PC-9 (cell line): ENCODE measurements at regions of chr17 and their contacts with region 1.

Region 1: DNA sequence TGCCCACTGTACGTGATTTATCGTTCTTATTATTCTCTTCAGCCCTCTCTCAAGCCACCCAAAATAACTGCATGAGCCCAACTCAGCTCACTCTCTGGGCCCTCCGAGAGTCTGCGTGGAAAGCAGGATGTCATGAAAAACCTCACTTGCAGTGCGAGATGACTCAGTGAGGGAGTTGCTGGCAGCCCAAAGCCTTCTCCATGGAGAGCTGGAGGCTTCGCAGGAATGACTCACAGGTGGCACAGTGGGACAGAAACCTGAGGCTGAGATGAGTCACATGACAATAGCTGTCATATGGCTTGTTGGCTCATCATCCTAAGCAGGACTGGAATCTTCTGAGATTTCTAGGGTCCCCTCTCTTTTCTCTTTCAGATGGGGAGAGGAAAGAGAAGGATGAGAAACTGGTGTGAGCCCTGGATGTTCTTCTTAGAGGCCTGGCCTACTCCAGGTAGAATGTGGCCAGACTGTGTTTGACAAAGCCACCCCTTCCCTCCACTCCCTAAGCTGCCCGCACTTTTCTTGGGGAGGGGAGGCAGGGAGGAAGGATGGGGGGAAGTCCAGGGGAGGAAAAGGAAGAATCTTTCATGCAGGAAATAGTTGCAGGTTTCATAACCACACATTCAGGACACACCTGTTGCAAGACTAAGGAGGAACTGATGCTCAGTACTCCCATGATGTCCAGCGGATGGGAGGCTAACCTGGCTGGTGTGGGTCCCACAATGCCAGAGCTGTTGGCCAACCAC is 160.6 kb upstream of the RPL38 start:
- DNase-seq: peak; percentile 27 to 70
- H3K4me3 ChIP-seq: no peak overlapping the region
- H3K27ac ChIP-seq: no peak overlapping the region
- H3K4me1 ChIP-seq: no peaks in the 10 kb centered on the region
- H3K27me3 ChIP-seq: peaks cover 74% of the 10 kb centered on the region
- CTCF ChIP-seq: no peak

Region 2: GRCh38 chr17:73936908-73937627 is 105.8 kb before region 1 on chr17:
- CTCF ChIA-PET with region 1: interaction called, 14 read pairs
- POLR2A ChIA-PET with region 1: interaction called, 4 read pairs
- intact Hi-C with region 1: no loop called
- DNase-seq: no peak
- H3K4me3 ChIP-seq: no peak overlapping the region
- H3K27ac ChIP-seq: no peak overlapping the region
- H3K4me1 ChIP-seq: no peaks in the 10 kb centered on the region
- H3K27me3 ChIP-seq: peaks cover 88% of the 10 kb centered on the region
- CTCF ChIP-seq: no peak

Region 3: DNA sequence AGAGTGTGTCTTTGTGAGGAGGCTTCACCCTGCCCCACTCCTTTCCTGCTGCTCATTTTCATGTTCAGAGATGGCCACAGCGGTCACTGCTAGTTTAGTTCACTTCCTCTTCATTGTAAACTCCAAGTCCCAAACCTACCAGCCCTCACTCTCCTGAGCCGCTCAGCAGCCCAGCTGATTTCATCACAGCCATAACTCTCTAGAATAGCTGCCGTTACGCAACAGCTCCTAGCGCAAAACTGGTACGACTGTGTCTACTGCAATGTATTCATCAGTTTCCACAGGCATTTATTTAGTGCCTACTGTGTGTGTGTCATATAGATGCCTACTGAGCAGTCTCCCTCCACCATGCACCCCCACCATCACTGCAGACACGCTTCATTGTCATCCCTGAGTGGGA is 73.0 kb before region 1 on chr17:
- CTCF ChIA-PET with region 1: no interaction called
- POLR2A ChIA-PET with region 1: no interaction called
- intact Hi-C with region 1: no loop called
- DNase-seq: no peak
- H3K4me3 ChIP-seq: no peak overlapping the region
- H3K27ac ChIP-seq: no peak overlapping the region
- H3K4me1 ChIP-seq: no peaks in the 10 kb centered on the region
- H3K27me3 ChIP-seq: peaks cover 83% of the 10 kb centered on the region
- CTCF ChIP-seq: no peak

Region 4: GRCh38 chr17:74646231-74646630 is 603.3 kb after region 1 on chr17:
- CTCF ChIA-PET with region 1: no interaction called
- POLR2A ChIA-PET with region 1: no interaction called
- intact Hi-C with region 1: no loop called
- DNase-seq: no peak
- H3K4me3 ChIP-seq: no peak overlapping the region
- H3K27ac ChIP-seq: no peak overlapping the region
- H3K4me1 ChIP-seq: no peaks in the 10 kb centered on the region
- H3K27me3 ChIP-seq: peaks cover 95% of the 10 kb centered on the region
- CTCF ChIP-seq: peak; percentile 45; the same call in 1 of the 2 replicates